H1 (cell line): ENCODE measurements at regions of chr18 and their contacts with region 1.

Region 1: GRCh38 chr18:27363872-27364271 is 178.8 kb upstream of the CHST9 start:
- DNase-seq: no peak
- H3K4me3 ChIP-seq: no peak overlapping the region
- H3K27ac ChIP-seq: no peak overlapping the region
- H3K4me1 ChIP-seq: no peaks in the 10 kb centered on the region
- H3K27me3 ChIP-seq: no peaks in the 10 kb centered on the region
- CTCF ChIP-seq: peak in 2 of 3 experiments; percentile 27 to 39; a peak in 2 of 4 replicates
- EP300 ChIP-seq: no peak
- POLR2A ChIP-seq: no peak
- RAD21 ChIP-seq: peak; percentile 48 to 63

Region 2: GRCh38 chr18:27378431-27379095 is 14.7 kb after region 1 on chr18:
- CTCF ChIA-PET with region 1: interaction called, 10 read pairs
- POLR2A ChIA-PET with region 1: no interaction called
- DNase-seq: no peak
- H3K4me3 ChIP-seq: no peak overlapping the region
- H3K27ac ChIP-seq: no peak overlapping the region
- H3K4me1 ChIP-seq: no peaks in the 10 kb centered on the region
- H3K27me3 ChIP-seq: peaks cover 0 to 2% (median 0%) of the 10 kb centered on the region in 4 experiments; a peak in 1 of 7 replicates
- CTCF ChIP-seq: no peak
- EP300 ChIP-seq: no peak
- POLR2A ChIP-seq: no peak
- RAD21 ChIP-seq: no peak

Region 3: DNA sequence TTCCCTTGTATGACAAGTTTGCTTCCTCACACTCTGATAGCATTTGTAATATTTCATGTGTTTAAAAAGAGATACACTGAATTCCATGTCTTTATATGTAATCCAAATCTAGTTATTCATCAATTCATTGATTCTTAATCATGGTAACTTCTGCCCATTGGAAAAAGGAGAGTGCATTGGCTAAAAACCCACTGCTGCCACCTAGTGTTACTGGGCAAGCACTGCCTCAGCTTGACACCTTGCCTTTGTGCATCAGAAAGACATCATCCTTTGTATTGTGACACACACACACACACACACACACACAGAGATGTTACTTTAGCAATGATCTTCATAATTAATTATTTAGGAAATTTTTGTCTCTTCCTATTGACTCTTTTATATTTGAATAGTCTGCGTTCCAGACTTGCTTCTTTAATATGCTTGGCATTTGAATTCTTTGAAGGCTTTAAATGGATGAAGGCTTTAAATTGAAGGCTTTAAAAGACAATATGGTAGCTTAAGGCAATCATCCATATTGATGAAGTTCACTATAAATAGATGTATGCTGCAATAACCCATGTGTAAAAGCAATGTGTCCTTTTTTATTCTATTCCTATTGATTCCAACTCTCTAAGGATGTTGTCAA is 235.4 kb after region 1 on chr18:
- CTCF ChIA-PET with region 1: interaction called, 24 read pairs
- POLR2A ChIA-PET with region 1: no interaction called
- DNase-seq: peak in 1 of 2 experiments; percentile 68
- H3K4me3 ChIP-seq: no peak overlapping the region
- H3K27ac ChIP-seq: no peak overlapping the region
- H3K4me1 ChIP-seq: peaks cover 0 to 3% (median 0%) of the 10 kb centered on the region in 4 experiments; a peak in 2 of 7 replicates
- H3K27me3 ChIP-seq: no peaks in the 10 kb centered on the region
- CTCF ChIP-seq: peak; percentile 71 to 94 (median 81)
- EP300 ChIP-seq: no peak
- POLR2A ChIP-seq: no peak
- RAD21 ChIP-seq: peak; percentile 92 to 94